ENCODE measurements at regions of chr18 and their contacts with region 1.

Region 1: DNA sequence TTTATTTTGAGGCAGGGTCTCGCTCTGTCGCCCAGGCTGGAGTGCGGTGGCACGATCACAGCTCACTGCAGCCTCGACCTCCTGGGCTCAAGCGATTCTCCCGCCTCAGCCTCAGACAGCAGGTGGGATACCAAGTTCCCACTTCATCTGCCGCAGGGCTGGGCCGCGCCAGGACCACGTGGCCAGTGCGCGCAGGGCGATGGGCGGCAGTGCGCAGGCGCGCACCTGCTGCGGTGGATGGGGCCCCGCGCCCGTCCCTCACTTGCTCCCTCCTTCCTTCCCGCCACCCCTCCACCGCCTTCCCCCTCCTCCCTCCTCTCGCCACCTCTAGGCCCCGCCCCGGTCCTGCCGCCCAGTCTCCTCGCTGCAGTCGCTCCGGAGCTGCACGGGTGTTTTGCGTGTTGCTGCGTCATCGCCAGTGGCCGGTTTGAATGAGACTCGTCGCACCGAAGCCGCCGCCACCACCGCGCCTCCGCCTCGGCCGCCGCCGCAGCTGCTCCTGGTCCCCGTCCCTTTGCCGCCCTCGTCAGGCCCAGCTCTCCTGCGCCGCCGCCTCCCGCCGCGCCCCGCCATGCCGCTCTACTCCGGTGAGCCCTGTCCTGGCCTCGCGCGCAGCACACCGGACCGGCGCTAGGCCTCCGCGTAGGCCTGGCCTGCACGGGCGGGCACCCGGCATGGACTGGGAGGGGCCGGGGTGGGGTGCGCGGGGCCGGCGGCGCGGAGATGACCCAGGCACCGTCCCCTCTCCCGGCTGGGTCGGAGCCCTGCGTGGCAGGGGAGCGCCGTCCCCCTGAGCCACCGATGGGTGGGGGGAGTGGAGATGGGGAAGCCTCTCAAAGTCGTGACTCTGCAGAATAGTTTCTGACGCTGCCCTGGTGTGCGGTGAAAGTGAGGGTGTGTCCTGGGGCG is at the start of gene USP14:
- DNase-seq: peak; percentile 95 to 98 (median 95)
- H3K4me3 ChIP-seq: peak within 1 kb of the TSS; percentile 76
- H3K4me3 Mint-ChIP-seq: peak within 1 kb of the TSS; percentile 88 to 96 (median 93)
- H3K27ac ChIP-seq: peak within 1 kb of the TSS; percentile 85
- H3K27ac Mint-ChIP-seq: peak within 1 kb of the TSS; percentile 92 to 98 (median 95)
- H3K4me1 ChIP-seq: peaks cover 21% of the 10 kb centered on the region
- H3K4me1 Mint-ChIP-seq: peaks cover 25 to 45% (median 41%) of the 10 kb centered on the region in 3 donors
- H3K27me3 ChIP-seq: no peaks in the 10 kb centered on the region
- H3K27me3 Mint-ChIP-seq: peaks cover 0 to 3% of the 10 kb centered on the region in 2 donors
- total RNA-seq, gene USP14: 111 to 113 TPM

Region 2: DNA sequence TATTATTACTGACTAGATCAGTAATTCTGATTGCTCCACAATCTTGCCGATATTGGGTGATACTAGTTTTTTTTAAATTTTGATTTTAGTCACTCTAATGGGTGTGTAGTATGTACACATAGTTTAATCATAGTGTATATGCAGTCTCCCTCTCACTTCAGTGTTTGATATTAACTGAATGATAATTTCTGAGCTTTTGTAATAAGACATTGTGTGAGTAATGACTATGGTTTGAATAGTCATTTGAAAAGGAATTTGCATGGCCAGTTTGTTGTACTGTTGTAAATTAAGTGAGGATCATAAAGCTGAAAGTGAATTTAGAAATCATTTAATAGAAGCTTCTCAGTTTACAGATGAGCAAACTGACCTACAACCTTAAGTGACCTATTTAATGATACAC is 33.3 kb after region 1 on chr18:
- CTCF ChIA-PET with region 1: no interaction called
- POLR2A ChIA-PET with region 1: no interaction called
- DNase-seq: no peak
- H3K4me3 ChIP-seq: no peak overlapping the region
- H3K4me3 Mint-ChIP-seq: no peak overlapping the region
- H3K27ac ChIP-seq: no peak overlapping the region
- H3K27ac Mint-ChIP-seq: peak overlapping the region in 1 of 8 donors; percentile 30
- H3K4me1 ChIP-seq: no peaks in the 10 kb centered on the region
- H3K4me1 Mint-ChIP-seq: peaks cover 35 to 46% (median 45%) of the 10 kb centered on the region in 3 donors
- H3K27me3 ChIP-seq: no peaks in the 10 kb centered on the region
- H3K27me3 Mint-ChIP-seq: no peaks in the 10 kb centered on the region

Region 3: GRCh38 chr18:210663-211179 is 52.3 kb after region 1 on chr18:
- CTCF ChIA-PET with region 1: no interaction called
- POLR2A ChIA-PET with region 1: no interaction called
- DNase-seq: no peak
- H3K4me3 ChIP-seq: no peak overlapping the region
- H3K4me3 Mint-ChIP-seq: no peak overlapping the region
- H3K27ac ChIP-seq: no peak overlapping the region
- H3K27ac Mint-ChIP-seq: peak overlapping the region in 2 of 8 donors; percentile 6 to 7
- H3K4me1 ChIP-seq: no peaks in the 10 kb centered on the region
- H3K4me1 Mint-ChIP-seq: no peaks in the 10 kb centered on the region
- H3K27me3 ChIP-seq: no peaks in the 10 kb centered on the region
- H3K27me3 Mint-ChIP-seq: no peaks in the 10 kb centered on the region

Region 4: DNA sequence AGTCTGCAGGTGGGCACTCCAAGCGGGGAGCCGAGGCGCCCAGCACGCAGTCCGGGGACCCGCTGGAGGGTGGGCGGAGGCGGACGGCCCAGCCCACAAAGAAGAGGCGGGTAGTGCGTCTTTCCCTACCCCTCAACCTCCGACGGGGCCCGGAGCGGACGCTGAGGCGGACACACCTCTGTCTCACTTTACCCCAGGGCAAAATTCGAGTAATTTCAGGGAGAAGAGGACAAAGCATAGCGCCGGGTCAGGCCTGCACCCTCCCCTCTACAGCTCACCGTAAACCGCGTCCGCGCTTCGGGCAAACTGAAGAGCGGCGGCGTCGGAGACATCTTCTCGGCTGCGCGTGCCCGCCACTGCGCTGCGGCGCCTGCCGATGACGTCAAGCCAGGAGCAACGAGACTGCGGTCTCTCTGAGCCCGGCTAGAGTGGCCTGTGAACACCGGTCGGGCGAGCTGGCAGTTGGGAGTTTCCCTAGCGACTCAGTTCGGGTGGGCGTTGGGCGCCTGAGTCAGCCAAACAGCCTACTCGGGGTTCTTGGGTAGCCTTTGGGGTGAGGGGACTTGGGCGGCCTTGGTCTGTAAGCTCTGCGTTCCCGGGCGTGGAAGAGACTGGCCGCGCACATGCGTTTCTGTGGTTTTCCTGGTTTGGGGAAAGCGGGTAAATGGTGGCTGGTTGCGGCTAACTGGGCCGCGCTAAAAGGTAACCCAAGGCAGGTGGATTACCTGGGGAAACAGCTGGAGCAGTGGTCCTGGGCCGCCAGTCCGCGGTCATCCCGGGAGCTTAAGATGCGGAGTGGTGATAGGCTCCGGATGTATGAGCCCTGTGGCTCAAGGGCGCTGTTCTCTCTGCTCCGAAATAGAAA is 109.5 kb after region 1 on chr18 and contains the start of gene THOC1:
- CTCF ChIA-PET with region 1: no interaction called
- POLR2A ChIA-PET with region 1: interaction called, 14 read pairs
- DNase-seq: peak; percentile 89 to 96 (median 92)
- H3K4me3 ChIP-seq: peak within 1 kb of the TSS; percentile 98
- H3K4me3 Mint-ChIP-seq: peak within 1 kb of the TSS; percentile 98 to 100 (median 100)
- H3K27ac ChIP-seq: peak within 1 kb of the TSS; percentile 99
- H3K27ac Mint-ChIP-seq: peak within 1 kb of the TSS; percentile 99 to 100 (median 100)
- H3K4me1 ChIP-seq: peaks cover 24% of the 10 kb centered on the region
- H3K4me1 Mint-ChIP-seq: peaks cover 33 to 49% (median 38%) of the 10 kb centered on the region in 3 donors
- H3K27me3 ChIP-seq: no peaks in the 10 kb centered on the region
- H3K27me3 Mint-ChIP-seq: no peaks in the 10 kb centered on the region
- total RNA-seq, gene THOC1: 51.8 to 54.6 TPM

Measured in CD8-positive, alpha-beta memory T cell (primary cell).